ENCODE measurements at regions of chr9 and their contacts with region 1.

Region 1: DNA sequence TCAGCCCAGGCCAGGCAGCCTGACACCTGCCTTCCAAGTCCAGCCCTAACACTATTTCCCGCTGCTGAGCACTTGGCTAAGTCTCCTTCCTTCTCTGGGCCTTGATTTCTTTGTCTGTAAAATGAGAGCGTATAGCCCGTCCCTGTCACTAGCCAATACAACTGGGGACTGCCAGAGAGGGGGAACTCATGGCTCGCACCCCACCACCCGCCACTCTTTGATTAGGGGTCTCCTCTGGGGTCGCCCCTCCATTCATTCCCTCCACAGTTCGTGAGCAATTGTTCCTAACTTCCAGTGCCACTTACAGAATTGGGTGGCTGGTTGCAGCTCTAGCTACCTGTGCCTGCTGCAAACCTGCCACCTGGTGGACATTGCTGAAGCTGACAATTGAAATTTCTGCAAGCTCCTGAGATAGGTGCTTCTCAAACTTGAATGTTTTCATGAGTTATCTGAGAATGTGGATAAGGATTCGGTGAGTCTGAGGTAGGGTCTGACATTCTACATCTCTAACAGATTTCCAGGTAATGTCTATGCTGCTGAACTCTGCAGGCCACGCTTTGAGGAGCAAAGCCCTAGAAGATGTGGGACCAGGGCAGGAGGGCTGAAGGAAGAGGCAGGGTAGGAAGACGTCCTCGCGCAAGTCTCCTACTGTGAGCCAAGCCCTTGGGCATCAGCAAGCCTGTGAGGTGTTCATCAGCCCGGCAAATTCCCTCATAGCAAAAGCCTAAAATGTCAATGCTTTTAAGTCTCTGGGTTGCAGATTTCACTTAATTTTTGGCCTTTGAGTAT is 13.3 kb upstream of the RECK start:
- DNase-seq: peak; percentile 78
- ATAC-seq: peak; percentile 96
- H3K4me3 Mint-ChIP-seq: no peak overlapping the region; the same call in 1 of the 2 replicates
- H3K27ac Mint-ChIP-seq: no peak overlapping the region
- H3K4me1 Mint-ChIP-seq: peaks cover 4% of the 10 kb centered on the region
- H3K27me3 Mint-ChIP-seq: no peaks in the 10 kb centered on the region; the same call in 1 of the 2 replicates
- CTCF ChIP-seq: peak; percentile 81

Region 2: GRCh38 chr9:35903049-35903448 is 120.4 kb before region 1 on chr9:
- CTCF ChIA-PET with region 1: interaction called, 19 read pairs
- POLR2A ChIA-PET with region 1: no interaction called
- DNase-seq: no peak
- ATAC-seq: no peak; the same call in 1 of the 2 replicates
- H3K4me3 Mint-ChIP-seq: no peak overlapping the region
- H3K27ac Mint-ChIP-seq: no peak overlapping the region
- H3K4me1 Mint-ChIP-seq: peaks cover 20% of the 10 kb centered on the region
- H3K27me3 Mint-ChIP-seq: peaks cover 5% of the 10 kb centered on the region; the same call in 1 of the 2 replicates
- CTCF ChIP-seq: peak; percentile 68

Region 3: GRCh38 chr9:35954942-35955546 is 68.4 kb before region 1 on chr9:
- CTCF ChIA-PET with region 1: interaction called, 56 read pairs
- POLR2A ChIA-PET with region 1: interaction called, 4 read pairs
- DNase-seq: peak; percentile 43
- ATAC-seq: peak; percentile 84
- H3K4me3 Mint-ChIP-seq: no peak overlapping the region
- H3K27ac Mint-ChIP-seq: no peak overlapping the region
- H3K4me1 Mint-ChIP-seq: peaks cover 5% of the 10 kb centered on the region; the same call in 1 of the 2 replicates
- H3K27me3 Mint-ChIP-seq: peaks cover 24% of the 10 kb centered on the region
- CTCF ChIP-seq: peak; percentile 78

Region 4: DNA sequence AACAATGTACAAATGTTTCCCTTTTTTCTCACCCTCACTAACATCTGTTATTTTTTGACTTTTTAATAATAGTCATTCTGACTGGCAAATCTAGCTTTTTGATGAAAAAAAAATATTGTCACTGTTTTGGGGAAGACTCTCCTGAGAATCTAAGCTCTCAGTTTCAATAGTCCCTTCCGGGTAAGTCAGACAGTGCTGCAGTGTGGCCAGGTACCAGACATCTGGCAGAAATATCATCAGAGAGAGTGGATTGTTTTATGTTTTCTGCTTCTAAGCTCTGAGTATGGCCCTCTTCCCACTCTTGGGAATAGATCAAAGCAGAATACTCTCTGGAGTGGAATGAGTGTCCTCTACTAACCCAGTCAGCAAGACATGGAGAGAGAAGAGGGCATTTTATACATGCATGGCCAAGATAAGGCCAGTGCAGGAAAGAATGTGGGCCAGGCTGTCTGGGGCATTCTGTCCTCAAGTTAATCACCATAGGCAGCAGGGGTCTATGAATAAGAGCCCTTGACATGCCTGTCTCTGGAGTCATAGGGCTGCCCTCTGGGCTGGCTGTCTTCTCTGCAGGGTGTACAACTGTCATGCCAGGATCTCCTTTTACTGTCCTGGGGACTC is 27.0 kb before region 1 on chr9:
- CTCF ChIA-PET with region 1: interaction called, 10 read pairs
- POLR2A ChIA-PET with region 1: no interaction called
- DNase-seq: no peak
- ATAC-seq: peak; percentile 84
- H3K4me3 Mint-ChIP-seq: no peak overlapping the region
- H3K27ac Mint-ChIP-seq: no peak overlapping the region
- H3K4me1 Mint-ChIP-seq: no peaks in the 10 kb centered on the region
- H3K27me3 Mint-ChIP-seq: peaks cover 14% of the 10 kb centered on the region; the same call in 1 of the 2 replicates
- CTCF ChIP-seq: no peak

Region 5: GRCh38 chr9:36036780-36037548 is 13.5 kb after region 1 on chr9 and contains the start of gene RECK:
- CTCF ChIA-PET with region 1: interaction called, 22 read pairs
- POLR2A ChIA-PET with region 1: no interaction called
- DNase-seq: peak; percentile 96
- ATAC-seq: peak; percentile 91
- H3K4me3 Mint-ChIP-seq: peak within 1 kb of the TSS; percentile 93
- H3K27ac Mint-ChIP-seq: peak within 1 kb of the TSS; percentile 91
- H3K4me1 Mint-ChIP-seq: peaks cover 28% of the 10 kb centered on the region
- H3K27me3 Mint-ChIP-seq: no peaks in the 10 kb centered on the region; the same call in 1 of the 2 replicates
- CTCF ChIP-seq: no peak
- total RNA-seq, gene RECK: 9.9 to 11.2 TPM (median 10.3 TPM) in 3 replicates

Measured in WTC11 (cell line).